Sciatic nerve (tissue), 2 donors: ENCODE measurements at regions of chr3 and their contacts with region 1.

Region 1: DNA sequence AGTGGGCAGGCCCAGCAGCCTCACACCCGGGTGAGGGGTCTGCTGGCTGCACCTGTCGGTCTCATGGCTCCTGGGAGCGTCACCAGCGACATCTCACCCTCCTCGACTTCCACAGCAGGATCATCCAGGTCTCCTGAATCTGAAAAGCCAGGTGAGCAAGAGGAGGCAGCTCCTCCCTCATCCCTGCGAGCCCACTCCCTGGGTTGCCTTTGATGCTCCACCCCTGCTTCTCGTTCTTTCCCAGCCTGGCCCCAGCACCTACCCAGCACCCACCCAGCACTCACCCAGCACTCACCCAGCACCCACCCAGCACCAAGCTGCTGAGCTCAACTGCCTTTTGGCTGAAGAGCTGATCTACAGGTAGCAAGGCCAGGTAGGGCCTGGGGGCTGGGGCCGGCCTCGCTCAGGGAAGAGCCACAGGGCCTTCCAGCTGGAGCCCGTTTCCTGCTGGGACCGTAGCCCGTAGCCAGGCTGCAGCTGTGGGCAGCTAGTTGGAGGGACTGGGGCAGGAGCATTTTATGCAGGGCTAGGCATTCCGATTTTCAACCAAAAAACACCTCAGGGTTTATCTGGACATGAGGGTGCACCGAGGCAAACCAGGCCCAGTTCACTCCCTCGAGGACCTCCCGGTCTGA is at the start of gene H1-8:
- DNase-seq: no peak
- ATAC-seq: peak; percentile 22
- total RNA-seq, gene H1-8: not detected

Region 2: DNA sequence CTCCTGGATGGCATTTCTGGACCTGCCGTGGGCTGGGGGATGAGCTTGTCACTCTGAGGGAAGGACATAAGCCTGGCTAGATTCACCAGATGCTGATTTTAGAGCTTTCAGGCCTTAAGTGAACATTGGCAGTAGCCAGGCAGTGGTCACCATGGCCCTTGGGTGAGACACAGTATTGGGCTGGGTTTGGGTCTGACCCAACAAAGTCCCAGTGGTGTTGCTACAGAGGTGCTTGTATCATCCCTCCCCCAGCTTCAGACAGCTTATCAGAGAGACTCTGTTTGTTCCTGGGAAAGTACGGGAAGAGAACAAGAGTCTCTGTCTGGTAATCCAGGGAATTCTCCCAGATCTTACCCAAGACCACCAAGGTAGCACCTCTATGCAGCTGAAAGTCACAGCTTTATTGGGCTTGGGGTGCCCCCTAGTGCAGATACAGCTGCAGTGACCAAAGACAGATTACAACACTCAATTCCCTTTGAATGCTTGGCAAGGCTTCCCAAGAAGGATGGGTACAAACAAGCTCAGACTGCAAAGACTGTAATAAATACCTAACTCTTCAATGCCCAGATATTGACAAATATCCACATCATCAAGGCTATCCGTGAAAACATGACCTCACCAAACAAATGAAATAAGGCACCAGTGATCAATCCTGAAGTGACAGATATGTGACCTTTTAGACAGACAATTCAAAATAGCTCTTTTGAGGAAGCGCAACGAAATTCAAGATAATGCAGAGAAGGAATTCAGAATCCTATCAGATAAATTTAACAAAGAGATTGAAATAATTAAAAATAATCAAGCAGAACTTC is 1409.8 kb before region 1 on chr3:
- intact Hi-C with region 1: loop called (anchors 5 kb)
- DNase-seq: no peak
- ATAC-seq: no peak

Region 3: GRCh38 chr3:129295286-129295685 is 248.0 kb before region 1 on chr3:
- intact Hi-C with region 1: no loop called
- DNase-seq: no peak
- ATAC-seq: no peak

Region 4: GRCh38 chr3:129409541-129409940 is 133.7 kb before region 1 on chr3:
- intact Hi-C with region 1: no loop called
- DNase-seq: no peak
- ATAC-seq: no peak